Thyroid gland (tissue), 4 donors: ENCODE measurements at regions of chr2 and their contacts with region 1.

Region 1: DNA sequence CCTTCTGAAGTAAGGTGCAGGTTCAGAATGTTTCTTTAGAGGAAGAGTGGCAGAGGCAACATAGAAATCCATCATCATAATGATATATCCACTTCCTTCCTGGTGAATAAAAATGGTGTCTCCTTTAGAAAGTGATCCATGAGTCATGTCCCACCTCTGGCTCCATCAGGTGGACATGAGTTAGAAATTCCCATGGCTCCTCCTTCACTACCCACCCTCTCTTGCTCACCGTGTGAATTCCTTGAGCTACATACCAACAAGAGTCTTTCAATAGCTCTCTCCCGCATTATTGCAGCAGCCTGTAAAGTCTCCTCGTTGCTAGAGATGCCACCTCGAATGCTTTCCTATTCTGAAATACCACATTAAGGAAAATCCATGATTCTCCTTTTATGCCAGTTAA is 317.6 kb downstream of the LNPK start:
- DNase-seq: no peak
- H3K4me3 ChIP-seq: no peak overlapping the region
- H3K27ac ChIP-seq: no peak overlapping the region
- H3K4me1 ChIP-seq: no peaks in the 10 kb centered on the region
- H3K27me3 ChIP-seq: peaks cover 6% of the 10 kb centered on the region
- CTCF ChIP-seq: no peak
- POLR2A ChIP-seq: no peak

Region 2: GRCh38 chr2:175575346-175576258 is 108.9 kb before region 1 on chr2:
- intact Hi-C with region 1: no loop called
- DNase-seq: peak in 1 of 2 donors; percentile 2
- H3K4me3 ChIP-seq: no peak overlapping the region
- H3K27ac ChIP-seq: no peak overlapping the region
- H3K4me1 ChIP-seq: peaks cover 9% of the 10 kb centered on the region in 2 donors
- H3K27me3 ChIP-seq: no peaks in the 10 kb centered on the region
- CTCF ChIP-seq: no peak
- POLR2A ChIP-seq: no peak

Region 3: GRCh38 chr2:176096986-176097819 is 412.7 kb after region 1 on chr2:
- intact Hi-C with region 1: loop called (anchors 10 kb)
- DNase-seq: peak; percentile 53 to 70
- H3K4me3 ChIP-seq: no peak overlapping the region
- H3K27ac ChIP-seq: no peak overlapping the region
- H3K4me1 ChIP-seq: peaks cover 9 to 36% of the 10 kb centered on the region in 2 donors
- H3K27me3 ChIP-seq: peaks cover 90% of the 10 kb centered on the region
- CTCF ChIP-seq: peak; percentile 15 to 76 (median 61)
- POLR2A ChIP-seq: no peak